Tibial artery (tissue), 4 donors: ENCODE measurements at regions of chr13 and their contacts with region 1.

Region 1: GRCh38 chr13:110216398-110217041 is 90.4 kb downstream of the COL4A1 start:
- DNase-seq: peak in 1 of 2 donors; percentile 84
- H3K4me3 ChIP-seq: peak overlapping the region in 1 of 2 donors; percentile 12
- H3K27ac ChIP-seq: peak overlapping the region; percentile 73 to 78
- H3K4me1 ChIP-seq: peaks cover 8 to 77% (median 53%) of the 10 kb centered on the region in 4 donors
- H3K27me3 ChIP-seq: no peaks in the 10 kb centered on the region
- CTCF ChIP-seq: no peak

Region 2: GRCh38 chr13:110168999-110169933 is 47.3 kb before region 1 on chr13:
- intact Hi-C with region 1: no loop called
- DNase-seq: no peak
- H3K4me3 ChIP-seq: no peak overlapping the region
- H3K27ac ChIP-seq: peak overlapping the region; percentile 20 to 60
- H3K4me1 ChIP-seq: peaks cover 0 to 11% (median 2%) of the 10 kb centered on the region in 4 donors
- H3K27me3 ChIP-seq: no peaks in the 10 kb centered on the region
- CTCF ChIP-seq: no peak

Region 3: GRCh38 chr13:110233951-110234280 is 17.4 kb after region 1 on chr13:
- intact Hi-C with region 1: loop called (anchors 2 kb)
- DNase-seq: no peak
- H3K4me3 ChIP-seq: no peak overlapping the region
- H3K27ac ChIP-seq: peak overlapping the region; percentile 82 to 91
- H3K4me1 ChIP-seq: peaks cover 1 to 89% (median 57%) of the 10 kb centered on the region in 4 donors
- H3K27me3 ChIP-seq: no peaks in the 10 kb centered on the region
- CTCF ChIP-seq: no peak

Region 4: GRCh38 chr13:110436276-110436675 is 219.8 kb after region 1 on chr13:
- intact Hi-C with region 1: loop called (anchors 5 kb)
- DNase-seq: no peak
- H3K4me3 ChIP-seq: no peak overlapping the region
- H3K27ac ChIP-seq: peak overlapping the region; percentile 50 to 61
- H3K4me1 ChIP-seq: peaks cover 0 to 47% (median 25%) of the 10 kb centered on the region in 4 donors
- H3K27me3 ChIP-seq: no peaks in the 10 kb centered on the region
- CTCF ChIP-seq: no peak

Region 5: DNA sequence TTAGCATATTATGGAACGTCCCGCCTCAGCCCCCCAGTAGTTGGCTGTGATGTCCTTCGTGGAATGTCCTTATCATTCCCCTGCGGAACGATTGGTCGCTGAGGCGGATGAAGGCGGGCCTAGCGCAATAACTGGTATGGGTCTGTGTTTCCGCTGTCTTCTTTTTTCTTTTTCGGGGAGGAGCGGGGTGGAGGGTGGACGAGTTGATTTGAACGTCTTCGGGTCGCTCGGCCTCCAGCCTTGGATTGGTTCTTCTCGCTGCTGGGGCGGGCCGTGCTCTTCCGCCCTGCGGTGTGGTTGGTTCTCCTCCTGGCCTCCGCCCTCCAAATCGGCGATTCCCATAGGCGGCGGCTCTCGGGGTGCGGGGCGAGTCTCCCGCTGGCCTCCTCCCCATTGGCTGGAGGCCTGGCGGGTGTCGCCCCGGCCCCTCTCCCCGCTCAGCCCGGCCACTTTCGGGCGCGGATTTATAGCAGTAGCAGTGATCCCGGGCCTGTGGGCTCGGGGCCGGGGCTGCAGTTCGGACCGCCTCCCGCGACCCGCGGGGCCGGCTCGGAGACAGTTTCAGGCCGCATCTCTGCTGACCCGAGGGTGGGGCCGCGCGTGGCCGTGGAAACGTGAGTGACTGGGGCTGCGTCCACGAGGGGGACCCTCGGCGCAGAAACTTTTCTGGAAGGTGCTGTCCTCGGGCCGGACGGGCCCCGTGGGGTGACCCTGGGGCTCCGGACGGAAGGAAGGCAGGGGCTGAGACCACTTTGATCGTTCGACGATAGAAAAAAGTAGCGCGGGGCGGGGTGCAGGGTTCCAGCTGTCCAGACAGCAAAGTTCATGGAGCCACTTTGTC is 499.1 kb after region 1 on chr13:
- intact Hi-C with region 1: loop called (anchors 10 kb)
- DNase-seq: peak; percentile 99
- H3K4me3 ChIP-seq: peak overlapping the region; percentile 92 to 98
- H3K27ac ChIP-seq: peak overlapping the region; percentile 99
- H3K4me1 ChIP-seq: peaks cover 0 to 34% (median 27%) of the 10 kb centered on the region in 4 donors
- H3K27me3 ChIP-seq: no peaks in the 10 kb centered on the region
- CTCF ChIP-seq: no peak